Activated naive CD4-positive, alpha-beta T cell treated with anti-CD3 and anti-CD28 coated beads, Interleukin-2, amount 10 ng/mL, durations not matched to agents 7 days and 5 days (primary cell): ENCODE measurements at regions of chr14 and their contacts with region 1.

Region 1: DNA sequence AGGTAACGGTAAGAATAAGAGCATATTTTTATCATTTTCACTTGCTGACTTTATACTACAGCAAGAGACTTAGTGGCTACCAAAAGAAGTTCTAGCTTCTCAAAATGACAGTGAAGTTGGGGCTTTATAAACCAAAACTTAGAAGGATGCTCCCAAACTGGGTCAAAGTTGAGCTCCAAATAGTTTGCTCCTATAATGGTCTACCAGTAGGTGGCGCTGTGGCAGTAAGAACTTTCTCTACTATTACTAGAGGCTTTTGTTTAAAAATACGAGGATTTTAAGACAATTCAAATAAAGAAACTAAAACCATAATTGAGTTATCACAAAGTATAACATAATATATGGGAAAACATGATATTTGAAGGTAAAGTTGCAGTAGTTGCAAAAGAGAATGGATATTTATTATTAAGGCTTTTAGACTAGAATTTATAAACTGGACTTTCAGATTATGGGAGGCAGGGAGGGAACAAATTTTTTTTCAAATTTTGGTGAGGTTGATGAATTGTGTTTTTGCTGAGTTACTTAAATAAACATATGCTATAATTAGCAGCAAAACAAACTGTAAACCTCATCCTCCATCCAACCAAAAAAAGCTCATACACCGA is 75.0 kb downstream of the TGFB3 start:
- DNase-seq: peak; percentile 80
- H3K4me3 Mint-ChIP-seq: no peak overlapping the region
- H3K27ac Mint-ChIP-seq: no peak overlapping the region
- H3K4me1 Mint-ChIP-seq: no peaks in the 10 kb centered on the region
- H3K27me3 Mint-ChIP-seq: no peaks in the 10 kb centered on the region

Region 2: DNA sequence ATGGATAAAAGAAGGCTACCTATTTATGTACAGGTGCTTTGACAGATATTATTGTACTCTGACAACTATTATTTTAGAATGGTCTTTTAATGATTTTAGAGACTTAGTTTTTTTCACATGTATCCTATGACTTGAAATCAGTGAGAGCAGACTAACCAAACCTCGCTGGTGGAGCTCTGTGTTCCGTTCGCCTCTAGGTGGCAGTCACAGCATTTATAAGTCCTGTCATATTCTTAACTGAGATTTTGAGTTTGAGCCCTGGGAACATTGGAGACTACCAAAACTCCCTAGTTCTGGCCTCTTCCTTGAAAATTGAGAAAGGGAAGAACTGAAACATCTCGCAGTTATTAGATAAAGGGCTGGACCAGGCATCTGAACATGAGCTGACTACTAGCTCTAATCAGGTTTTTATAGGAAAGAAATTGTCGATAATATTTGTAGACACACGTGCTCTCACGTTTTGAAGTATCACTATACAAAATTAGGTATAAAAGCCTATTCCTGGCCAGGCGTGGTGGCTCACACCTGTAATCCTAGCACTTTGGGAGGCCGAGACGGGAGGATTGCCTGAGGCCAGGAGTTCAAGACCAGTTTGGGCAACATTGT is 197.5 kb before region 1 on chr14:
- CTCF ChIA-PET with region 1: interaction called, 12 read pairs
- DNase-seq: peak; percentile 78
- H3K4me3 Mint-ChIP-seq: no peak overlapping the region
- H3K27ac Mint-ChIP-seq: no peak overlapping the region
- H3K4me1 Mint-ChIP-seq: no peaks in the 10 kb centered on the region
- H3K27me3 Mint-ChIP-seq: no peaks in the 10 kb centered on the region

Region 3: DNA sequence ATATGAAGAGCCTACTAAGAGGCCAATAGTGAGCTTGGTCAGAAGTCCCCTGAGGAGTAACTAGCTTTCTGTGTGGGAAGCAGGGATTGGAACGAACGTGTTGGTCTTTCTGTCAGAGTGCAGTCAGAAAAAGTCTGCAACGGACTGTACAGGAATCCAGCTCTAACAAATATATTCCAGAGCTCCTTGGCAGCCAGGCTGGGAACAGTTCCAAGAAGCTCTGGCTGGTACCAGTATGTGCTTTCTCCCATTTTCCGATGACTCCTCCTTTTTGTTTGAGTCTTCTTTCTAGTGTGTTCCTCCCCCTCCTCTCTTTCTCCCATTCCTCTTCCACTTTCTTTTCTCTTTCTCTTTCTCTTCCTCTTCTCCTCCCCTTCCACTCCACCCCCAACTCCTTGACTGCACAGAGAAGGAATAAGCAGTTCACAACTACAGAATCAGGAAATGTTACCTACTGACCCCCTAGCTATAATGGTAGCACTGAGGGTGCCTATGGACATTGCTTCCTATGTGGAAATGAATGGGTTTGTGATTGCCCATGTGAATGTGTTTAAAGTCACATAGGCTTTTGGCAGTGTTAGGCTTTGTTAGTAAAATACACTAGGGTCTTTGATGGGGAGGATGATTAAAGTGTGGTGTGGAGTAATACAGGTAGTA is 185.8 kb before region 1 on chr14:
- CTCF ChIA-PET with region 1: no interaction called
- DNase-seq: no peak
- H3K4me3 Mint-ChIP-seq: no peak overlapping the region
- H3K27ac Mint-ChIP-seq: no peak overlapping the region
- H3K4me1 Mint-ChIP-seq: peaks cover 8% of the 10 kb centered on the region
- H3K27me3 Mint-ChIP-seq: no peaks in the 10 kb centered on the region

Region 4: GRCh38 chr14:75896341-75896740 is 10.4 kb before region 1 on chr14:
- CTCF ChIA-PET with region 1: interaction called, 12 read pairs
- DNase-seq: no peak
- H3K4me3 Mint-ChIP-seq: no peak overlapping the region
- H3K27ac Mint-ChIP-seq: no peak overlapping the region
- H3K4me1 Mint-ChIP-seq: no peaks in the 10 kb centered on the region
- H3K27me3 Mint-ChIP-seq: no peaks in the 10 kb centered on the region

Region 5: DNA sequence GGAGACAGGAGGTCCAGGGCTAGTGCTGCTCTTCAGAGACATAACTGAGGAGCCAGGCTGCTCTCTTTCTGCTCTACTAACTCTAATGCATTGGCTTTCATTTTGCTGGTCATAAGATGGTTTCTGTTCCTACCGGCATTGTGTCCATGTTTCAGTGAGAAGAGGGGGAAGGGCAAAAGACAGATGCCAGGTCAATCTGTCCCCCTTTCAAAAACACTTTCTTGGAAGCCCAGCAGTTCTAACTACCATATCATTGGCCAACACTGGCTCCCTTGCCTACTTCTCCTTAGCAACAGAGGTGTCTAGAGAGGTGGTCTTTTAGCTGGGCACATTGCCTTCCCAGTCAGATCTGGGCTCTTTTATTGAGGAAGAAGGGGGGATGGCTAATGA is 11.2 kb after region 1 on chr14:
- CTCF ChIA-PET with region 1: interaction called, 10 read pairs
- DNase-seq: no peak
- H3K4me3 Mint-ChIP-seq: no peak overlapping the region
- H3K27ac Mint-ChIP-seq: no peak overlapping the region
- H3K4me1 Mint-ChIP-seq: no peaks in the 10 kb centered on the region
- H3K27me3 Mint-ChIP-seq: no peaks in the 10 kb centered on the region

Region 6: DNA sequence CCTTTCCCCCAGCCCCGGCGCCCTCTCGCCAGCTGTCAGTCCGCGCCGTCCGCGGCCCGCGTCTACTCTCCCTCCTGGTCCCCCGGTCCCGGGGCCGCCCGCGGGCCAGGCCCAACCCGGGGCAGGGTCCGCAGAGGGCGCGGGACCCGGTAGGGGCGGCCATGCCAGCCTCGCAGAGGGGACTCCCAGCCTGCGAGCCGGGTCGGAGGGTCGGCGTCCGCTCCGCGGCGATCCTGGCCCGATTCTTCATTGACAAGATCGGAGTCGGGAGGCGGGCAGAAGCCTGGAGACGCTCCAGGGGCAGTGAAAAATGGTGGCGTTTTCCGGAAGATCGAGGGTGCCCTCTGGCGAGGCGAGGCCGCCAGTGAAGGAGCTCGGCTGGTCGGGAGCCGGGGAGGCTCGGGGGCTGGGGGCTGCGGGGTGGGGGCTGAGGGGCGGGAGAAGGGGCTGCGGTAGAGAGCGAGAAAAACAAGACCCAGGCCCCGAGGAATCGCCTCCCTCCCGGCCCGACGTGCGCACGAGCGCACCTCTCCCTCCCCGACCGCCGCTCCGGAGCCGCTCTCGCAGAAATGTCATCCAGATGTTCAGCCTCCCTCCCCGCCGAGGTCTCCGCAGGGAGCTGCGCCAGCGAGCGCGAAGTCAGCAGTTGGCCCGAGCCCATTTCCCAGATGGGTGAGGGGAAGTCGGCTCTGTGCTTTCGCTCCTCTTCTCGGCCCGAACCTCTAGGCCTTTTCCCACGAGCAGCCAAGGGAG is 75.7 kb after region 1 on chr14:
- CTCF ChIA-PET with region 1: interaction called, 88 read pairs
- DNase-seq: peak; percentile 84
- H3K4me3 Mint-ChIP-seq: peak overlapping the region; percentile 70
- H3K27ac Mint-ChIP-seq: peak overlapping the region; percentile 74
- H3K4me1 Mint-ChIP-seq: peaks cover 47% of the 10 kb centered on the region
- H3K27me3 Mint-ChIP-seq: peaks cover 20% of the 10 kb centered on the region